Activated CD4-positive, alpha-beta T cell treated with anti-CD3 and anti-CD28 coated beads, Interleukin-2, amount 10 ng/mL, durations not matched to agents 24 days and 14 days (primary cell): ENCODE measurements at regions of chr5 and their contacts with region 1.

Region 1: GRCh38 chr5:157130925-157131324 is 11.7 kb downstream of the MED7 start:
- DNase-seq: peak; percentile 53
- H3K4me3 Mint-ChIP-seq: no peak overlapping the region
- H3K27ac Mint-ChIP-seq: no peak overlapping the region
- H3K4me1 Mint-ChIP-seq: peaks cover 35% of the 10 kb centered on the region
- H3K27me3 Mint-ChIP-seq: no peaks in the 10 kb centered on the region

Region 2: DNA sequence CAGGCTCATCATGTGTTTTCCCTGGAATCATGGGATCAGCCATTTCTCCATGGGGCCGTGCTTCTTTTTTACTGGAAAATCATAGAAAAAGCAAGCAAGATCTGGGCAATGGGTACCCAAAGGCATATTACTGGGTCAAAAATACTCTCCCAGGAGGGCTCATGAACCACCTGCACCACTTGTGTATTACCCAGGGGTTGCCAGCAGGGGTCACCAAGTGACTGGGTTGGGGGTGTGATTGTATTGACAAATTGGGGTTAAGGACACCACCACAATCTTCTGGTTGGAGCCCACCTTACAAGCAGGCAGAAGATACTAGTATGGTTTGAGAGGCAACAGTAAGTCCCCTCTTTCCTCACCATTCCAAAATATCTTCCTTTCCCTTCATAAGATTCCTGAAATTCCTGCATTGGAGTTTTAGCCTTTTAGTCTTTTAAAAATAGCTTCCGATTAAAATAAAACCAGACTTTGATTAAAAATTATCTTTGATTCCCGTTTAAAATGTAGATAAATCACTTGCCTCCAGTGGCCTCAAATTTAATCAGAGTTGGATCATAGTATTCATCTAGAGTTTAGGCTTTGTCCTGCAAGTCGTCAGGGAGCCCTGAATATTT is 1514.0 kb before region 1 on chr5:
- intact Hi-C with region 1: loop called (anchors 2 kb)
- DNase-seq: peak; percentile 84
- H3K4me3 Mint-ChIP-seq: no peak overlapping the region
- H3K27ac Mint-ChIP-seq: no peak overlapping the region
- H3K4me1 Mint-ChIP-seq: no peaks in the 10 kb centered on the region
- H3K27me3 Mint-ChIP-seq: peaks cover 11% of the 10 kb centered on the region

Region 3: GRCh38 chr5:156402387-156402921 is 728.5 kb before region 1 on chr5:
- intact Hi-C with region 1: loop called (anchors 5 kb)
- DNase-seq: peak; percentile 82
- H3K4me3 Mint-ChIP-seq: peak overlapping the region; percentile 60
- H3K27ac Mint-ChIP-seq: peak overlapping the region; percentile 78
- H3K4me1 Mint-ChIP-seq: peaks cover 8% of the 10 kb centered on the region
- H3K27me3 Mint-ChIP-seq: peaks cover 8% of the 10 kb centered on the region

Region 4: GRCh38 chr5:156934450-156935211 is 196.3 kb before region 1 on chr5:
- intact Hi-C with region 1: loop called (anchors 2 kb)
- DNase-seq: peak; percentile 90
- H3K4me3 Mint-ChIP-seq: peak overlapping the region; percentile 46
- H3K27ac Mint-ChIP-seq: peak overlapping the region; percentile 93
- H3K4me1 Mint-ChIP-seq: peaks cover 76% of the 10 kb centered on the region
- H3K27me3 Mint-ChIP-seq: no peaks in the 10 kb centered on the region